ENCODE measurements at regions of chr5 and their contacts with region 1.

Region 1: GRCh38 chr5:134370871-134371833 is at the start of gene UBE2B:
- DNase-seq: peak; percentile 98
- H3K4me3 Mint-ChIP-seq: peak within 1 kb of the TSS; percentile 92
- H3K27ac Mint-ChIP-seq: peak within 1 kb of the TSS; percentile 96
- H3K4me1 Mint-ChIP-seq: peaks cover 55% of the 10 kb centered on the region
- H3K27me3 Mint-ChIP-seq: peaks cover 2% of the 10 kb centered on the region
- total RNA-seq, gene UBE2B: 124 TPM

Region 2: GRCh38 chr5:134176511-134177368 is 194.4 kb before region 1 on chr5 and contains the start of gene SKP1:
- CTCF ChIA-PET with region 1: no interaction called
- POLR2A ChIA-PET with region 1: interaction called, 6 read pairs
- intact Hi-C with region 1: loop called (anchors 2 kb)
- DNase-seq: peak; percentile 88
- H3K4me3 Mint-ChIP-seq: peak within 1 kb of the TSS; percentile 95
- H3K27ac Mint-ChIP-seq: peak within 1 kb of the TSS; percentile 96
- H3K4me1 Mint-ChIP-seq: peaks cover 33% of the 10 kb centered on the region
- H3K27me3 Mint-ChIP-seq: no peaks in the 10 kb centered on the region
- total RNA-seq, gene SKP1: 284 to 286 TPM

Region 3: GRCh38 chr5:134503088-134503946 is 132.2 kb after region 1 on chr5:
- CTCF ChIA-PET with region 1: no interaction called
- POLR2A ChIA-PET with region 1: interaction called, 3 read pairs
- intact Hi-C with region 1: loop called (anchors 5 kb)
- DNase-seq: peak; percentile 92
- H3K4me3 Mint-ChIP-seq: peak overlapping the region; percentile 58
- H3K27ac Mint-ChIP-seq: peak overlapping the region; percentile 97
- H3K4me1 Mint-ChIP-seq: peaks cover 31% of the 10 kb centered on the region
- H3K27me3 Mint-ChIP-seq: no peaks in the 10 kb centered on the region

Region 4: DNA sequence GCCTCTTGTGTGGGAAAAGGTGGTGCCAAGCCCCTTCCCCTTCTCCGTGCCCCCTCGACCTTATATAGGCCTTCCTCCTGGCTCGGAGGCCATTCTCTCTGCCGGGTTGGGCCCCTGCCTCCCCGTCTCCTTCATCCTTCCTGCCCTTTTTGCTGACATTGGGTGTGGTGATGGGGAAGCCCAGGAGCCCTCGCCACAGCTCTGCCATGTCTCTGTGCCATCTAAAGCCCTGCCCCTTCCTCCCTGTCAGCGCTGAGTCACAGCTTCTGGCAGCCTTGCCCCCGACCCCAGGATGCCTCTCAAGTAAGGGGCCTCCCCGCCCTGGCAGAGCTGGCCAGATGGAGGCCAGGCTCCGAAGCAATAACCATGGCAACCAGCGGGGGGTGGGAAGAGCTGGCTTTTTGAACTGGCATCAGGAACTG is 184.7 kb after region 1 on chr5:
- CTCF ChIA-PET with region 1: interaction called, 3 read pairs
- POLR2A ChIA-PET with region 1: interaction called, 11 read pairs
- intact Hi-C with region 1: loop called (anchors 2 kb)
- DNase-seq: peak; percentile 97
- H3K4me3 Mint-ChIP-seq: peak overlapping the region; percentile 70
- H3K27ac Mint-ChIP-seq: peak overlapping the region; percentile 99
- H3K4me1 Mint-ChIP-seq: peaks cover 47% of the 10 kb centered on the region
- H3K27me3 Mint-ChIP-seq: no peaks in the 10 kb centered on the region

Region 5: GRCh38 chr5:134648425-134649162 is 277.4 kb after region 1 on chr5 and contains the start of gene SEC24A:
- CTCF ChIA-PET with region 1: no interaction called
- POLR2A ChIA-PET with region 1: no interaction called
- intact Hi-C with region 1: loop called (anchors 2 kb)
- DNase-seq: peak; percentile 95
- H3K4me3 Mint-ChIP-seq: peak within 1 kb of the TSS; percentile 81
- H3K27ac Mint-ChIP-seq: peak within 1 kb of the TSS; percentile 99
- H3K4me1 Mint-ChIP-seq: peaks cover 22% of the 10 kb centered on the region
- H3K27me3 Mint-ChIP-seq: no peaks in the 10 kb centered on the region
- total RNA-seq, gene SEC24A: 30.8 to 31.4 TPM